Adrenal gland (tissue), 19 donors: ENCODE measurements at regions of chrX and their contacts with region 1.

Region 1: GRCh38 chrX:17788439-17788838 is 51.1 kb downstream of the SCML1 start:
- DNase-seq: peak; percentile 24 to 60 (median 31)
- H3K4me3 ChIP-seq: no peak overlapping the region
- H3K27ac ChIP-seq: no peak overlapping the region
- H3K4me1 ChIP-seq: no peaks in the 10 kb centered on the region
- H3K27me3 ChIP-seq: no peaks in the 10 kb centered on the region
- CTCF ChIP-seq: peak; percentile 47 to 81 (median 72)
- POLR2A ChIP-seq: no peak

Region 2: GRCh38 chrX:18203631-18204030 is 415.2 kb after region 1 on chrX:
- intact Hi-C with region 1: loop called in 1 of 2 experiments (anchors 10 kb)
- DNase-seq: no peak
- H3K4me3 ChIP-seq: no peak overlapping the region
- H3K27ac ChIP-seq: no peak overlapping the region
- H3K4me1 ChIP-seq: no peaks in the 10 kb centered on the region
- H3K27me3 ChIP-seq: no peaks in the 10 kb centered on the region
- CTCF ChIP-seq: no peak
- POLR2A ChIP-seq: no peak